HAP-1 (cell line): ENCODE measurements at regions of chr9 and their contacts with region 1.

Region 1: GRCh38 chr9:133485361-133486260 is 6.7 kb upstream of the SLC2A6 start:
- DNase-seq: no peak
- H3K4me3 ChIP-seq: no peak overlapping the region
- H3K4me1 ChIP-seq: no peaks in the 10 kb centered on the region
- H3K27me3 ChIP-seq: peaks cover 3% of the 10 kb centered on the region; the same call in 1 of the 2 replicates

Region 2: DNA sequence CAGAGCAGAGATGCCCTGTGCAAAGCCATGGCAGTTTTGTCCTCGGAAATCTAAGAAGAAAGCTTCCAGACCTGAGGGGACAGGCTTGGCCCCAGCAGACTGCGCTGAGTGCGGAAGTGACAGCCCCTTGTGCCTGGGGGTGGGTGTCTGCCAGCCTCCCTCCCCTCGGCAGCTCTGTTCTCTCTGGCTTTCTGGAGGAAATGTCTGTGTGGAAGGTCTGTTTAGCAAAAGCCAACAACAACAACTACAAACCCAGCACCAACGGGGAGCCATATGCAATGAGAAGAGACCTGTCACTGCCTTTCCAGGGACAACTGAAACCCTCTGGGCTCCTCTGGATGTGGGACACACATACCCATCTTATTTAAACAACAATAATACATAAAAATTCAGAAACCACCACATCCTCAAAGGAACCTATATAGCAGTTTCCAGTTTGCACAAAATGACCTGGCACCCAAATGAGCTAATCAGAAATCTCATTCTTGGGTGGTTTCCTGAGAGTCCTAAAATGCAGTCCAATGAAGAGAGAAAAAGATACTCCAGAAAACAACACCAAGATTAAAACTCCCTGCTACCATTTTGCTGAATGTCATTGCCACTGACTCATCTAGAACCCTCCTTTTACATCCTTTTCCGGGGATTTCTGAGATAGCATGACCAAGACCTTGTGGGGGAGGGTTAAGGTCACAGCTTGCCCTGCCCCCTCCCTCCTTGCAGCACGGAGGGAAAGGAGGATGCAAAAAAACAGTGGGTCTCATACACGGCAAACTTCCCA is 705.2 kb before region 1 on chr9:
- in situ Hi-C with region 1: no loop called
- DNase-seq: no peak
- H3K4me3 ChIP-seq: no peak overlapping the region
- H3K4me1 ChIP-seq: no peaks in the 10 kb centered on the region
- H3K27me3 ChIP-seq: no peaks in the 10 kb centered on the region; the same call in 1 of the 2 replicates

Region 3: DNA sequence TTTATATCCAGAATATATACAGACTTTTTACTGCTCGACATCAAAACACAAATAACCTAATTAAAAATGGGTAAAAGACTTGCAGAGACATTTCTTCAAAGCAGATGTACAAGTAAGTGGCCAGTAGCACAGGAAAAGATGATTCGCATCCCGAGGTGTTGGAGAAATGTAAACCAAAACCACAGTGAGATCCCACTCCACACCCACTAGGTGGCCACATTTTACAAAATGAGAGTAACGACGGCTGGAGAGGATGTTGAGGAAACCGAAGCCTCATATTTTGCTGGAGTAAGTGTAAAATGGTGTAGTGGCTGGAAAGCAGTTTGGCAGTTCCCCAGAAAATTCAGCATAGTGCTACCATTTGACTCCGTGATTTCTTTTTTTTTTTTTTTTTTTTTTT is 300.6 kb before region 1 on chr9:
- in situ Hi-C with region 1: loop called (anchors 5 kb)
- DNase-seq: peak; percentile 61 to 67
- H3K4me3 ChIP-seq: no peak overlapping the region
- H3K4me1 ChIP-seq: no peaks in the 10 kb centered on the region
- H3K27me3 ChIP-seq: peaks cover 15% of the 10 kb centered on the region

Region 4: DNA sequence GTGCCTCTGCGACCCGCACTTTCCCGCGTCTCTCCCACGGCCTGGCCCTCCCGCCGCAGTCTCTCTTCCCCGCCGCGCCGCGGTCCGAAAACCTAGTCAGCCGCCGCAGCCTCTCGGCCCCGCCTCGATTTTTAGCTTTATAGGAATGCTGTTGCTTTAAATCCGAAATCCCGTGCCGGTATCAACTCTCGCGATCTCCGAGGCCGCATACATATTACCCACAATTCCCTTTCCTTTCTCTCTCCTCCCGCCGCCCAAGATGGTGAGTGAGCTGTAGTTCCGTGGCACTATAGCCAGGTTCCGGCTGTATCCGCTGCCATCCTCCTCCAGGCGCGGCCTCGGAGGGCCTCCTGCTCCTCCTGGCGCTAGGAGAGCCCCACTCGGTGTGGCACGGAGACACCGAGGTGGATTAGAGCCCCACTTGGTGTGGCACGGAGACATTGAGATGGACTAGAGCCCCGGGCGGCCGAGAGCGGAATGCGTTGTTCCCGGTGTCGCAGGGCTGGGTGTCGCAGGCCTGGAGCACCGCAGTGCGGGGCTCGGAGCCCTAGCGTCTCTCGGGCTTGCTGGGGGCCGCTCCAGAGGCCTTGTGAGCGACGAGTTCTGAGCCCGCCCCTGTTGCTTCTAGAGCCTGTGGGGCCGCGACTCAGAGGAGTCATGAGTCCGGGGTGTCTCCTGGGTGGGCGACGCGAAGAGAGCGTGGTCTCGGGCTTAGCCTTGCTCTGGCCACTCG is 137.5 kb before region 1 on chr9 and contains the starts of genes MED22 and RPL7A:
- in situ Hi-C with region 1: loop called (anchors 10 kb)
- DNase-seq: peak; percentile 92 to 96
- H3K4me3 ChIP-seq: peak within 1 kb of the TSS; percentile 98
- H3K4me1 ChIP-seq: peaks cover 12% of the 10 kb centered on the region
- H3K27me3 ChIP-seq: no peaks in the 10 kb centered on the region

Region 5: DNA sequence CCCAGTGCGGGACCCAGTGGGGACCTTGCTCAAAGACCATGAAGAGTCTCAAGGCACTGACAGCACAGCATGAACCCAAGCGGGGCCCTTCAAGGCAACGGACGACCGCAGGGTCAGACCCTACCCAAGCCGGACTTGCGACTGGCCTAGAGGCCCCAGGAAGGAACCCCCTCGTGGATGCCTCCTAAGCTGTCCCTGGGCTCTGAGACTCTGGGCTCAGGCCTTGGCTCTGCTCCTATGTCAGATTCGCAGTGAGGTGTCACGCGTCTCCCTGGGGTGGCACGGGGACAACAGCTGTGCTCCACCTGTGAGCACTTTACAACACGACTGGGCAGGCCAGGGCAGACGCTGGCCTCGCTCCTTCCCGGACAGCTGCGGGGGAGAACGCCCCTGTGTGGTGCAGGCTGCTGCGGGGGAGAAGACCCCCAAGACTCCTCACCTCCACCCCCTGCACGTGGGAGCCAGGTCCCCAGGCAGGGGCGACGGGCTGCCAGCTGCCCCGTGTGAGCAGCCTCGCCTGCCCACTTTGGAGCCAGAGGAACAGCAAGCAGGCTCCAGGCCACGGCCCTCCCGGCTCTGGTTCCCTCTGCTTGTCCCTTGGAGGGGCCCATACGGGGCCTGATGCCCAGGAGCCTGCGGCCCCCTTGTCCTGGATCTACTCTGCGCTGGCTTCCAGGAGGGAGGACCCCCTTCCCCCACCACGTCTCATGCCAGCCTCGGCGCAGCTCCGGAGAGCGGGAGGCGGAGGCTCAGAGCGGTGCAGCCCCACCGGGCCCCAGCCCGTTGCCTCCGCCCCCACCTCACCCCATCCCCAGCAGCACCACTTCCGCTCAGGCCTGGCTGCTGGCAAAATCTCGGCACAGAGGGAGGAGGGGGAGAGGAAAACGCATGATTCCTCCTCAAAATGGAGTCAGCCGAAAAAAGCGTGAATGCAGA is 216.5 kb after region 1 on chr9:
- in situ Hi-C with region 1: no loop called
- DNase-seq: no peak
- H3K4me3 ChIP-seq: no peak overlapping the region
- H3K4me1 ChIP-seq: no peaks in the 10 kb centered on the region
- H3K27me3 ChIP-seq: peaks cover 31% of the 10 kb centered on the region